ENCODE measurements at regions of chr6 and their contacts with region 1.

Region 1: GRCh38 chr6:135962731-135963130 is 111.2 kb downstream of the PDE7B start:
- DNase-seq: no peak

Region 2: GRCh38 chr6:135941275-135942025 is 21.3 kb before region 1 on chr6:
- intact Hi-C with region 1: loop called (anchors 2 kb)
- DNase-seq: no peak

Measured in cardiac septum (tissue), 1 donor.